MCF 10A (cell line): ENCODE measurements at regions of chr16 and their contacts with region 1.

Region 1: DNA sequence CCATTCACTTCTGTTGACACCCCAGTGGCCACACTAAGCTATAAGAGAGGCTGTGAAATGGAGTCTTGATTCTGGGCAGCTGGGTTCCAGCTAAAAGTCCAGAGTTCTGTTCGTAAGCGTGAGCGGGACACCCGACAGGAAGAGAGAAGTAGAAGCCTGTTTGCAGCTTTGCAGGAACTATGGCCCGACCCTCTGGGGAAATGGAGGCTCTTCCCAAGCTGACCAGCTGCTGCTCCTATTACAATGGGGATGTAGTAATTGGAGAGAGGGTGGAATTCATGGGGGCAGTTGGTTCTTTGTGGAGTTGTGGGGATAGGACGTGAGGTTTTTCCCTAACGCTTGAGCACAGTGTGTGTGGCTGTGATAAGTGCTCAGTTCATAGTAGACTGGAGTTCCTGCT is 28.4 kb downstream of the UBALD1 start:
- DNase-seq: no peak
- H3K4me3 Mint-ChIP-seq: no peak overlapping the region
- H3K27ac Mint-ChIP-seq: no peak overlapping the region
- H3K4me1 Mint-ChIP-seq: peaks cover 7% of the 10 kb centered on the region
- H3K27me3 Mint-ChIP-seq: no peaks in the 10 kb centered on the region
- CTCF ChIP-seq: no peak

Region 2: GRCh38 chr16:3202903-3203539 is 1383.3 kb before region 1 on chr16:
- CTCF ChIA-PET with region 1: no interaction called
- POLR2A ChIA-PET with region 1: no interaction called
- intact Hi-C with region 1: no loop called
- DNase-seq: no peak
- H3K4me3 Mint-ChIP-seq: no peak overlapping the region
- H3K27ac Mint-ChIP-seq: no peak overlapping the region
- H3K4me1 Mint-ChIP-seq: no peaks in the 10 kb centered on the region
- H3K27me3 Mint-ChIP-seq: peaks cover 20% of the 10 kb centered on the region
- CTCF ChIP-seq: no peak

Region 3: GRCh38 chr16:4544473-4544872 is 41.8 kb before region 1 on chr16:
- CTCF ChIA-PET with region 1: interaction called, 12 read pairs
- POLR2A ChIA-PET with region 1: no interaction called
- intact Hi-C with region 1: loop called (anchors 5 kb)
- DNase-seq: no peak
- H3K4me3 Mint-ChIP-seq: no peak overlapping the region
- H3K27ac Mint-ChIP-seq: no peak overlapping the region
- H3K4me1 Mint-ChIP-seq: no peaks in the 10 kb centered on the region
- H3K27me3 Mint-ChIP-seq: peaks cover 20% of the 10 kb centered on the region
- CTCF ChIP-seq: no peak

Region 4: DNA sequence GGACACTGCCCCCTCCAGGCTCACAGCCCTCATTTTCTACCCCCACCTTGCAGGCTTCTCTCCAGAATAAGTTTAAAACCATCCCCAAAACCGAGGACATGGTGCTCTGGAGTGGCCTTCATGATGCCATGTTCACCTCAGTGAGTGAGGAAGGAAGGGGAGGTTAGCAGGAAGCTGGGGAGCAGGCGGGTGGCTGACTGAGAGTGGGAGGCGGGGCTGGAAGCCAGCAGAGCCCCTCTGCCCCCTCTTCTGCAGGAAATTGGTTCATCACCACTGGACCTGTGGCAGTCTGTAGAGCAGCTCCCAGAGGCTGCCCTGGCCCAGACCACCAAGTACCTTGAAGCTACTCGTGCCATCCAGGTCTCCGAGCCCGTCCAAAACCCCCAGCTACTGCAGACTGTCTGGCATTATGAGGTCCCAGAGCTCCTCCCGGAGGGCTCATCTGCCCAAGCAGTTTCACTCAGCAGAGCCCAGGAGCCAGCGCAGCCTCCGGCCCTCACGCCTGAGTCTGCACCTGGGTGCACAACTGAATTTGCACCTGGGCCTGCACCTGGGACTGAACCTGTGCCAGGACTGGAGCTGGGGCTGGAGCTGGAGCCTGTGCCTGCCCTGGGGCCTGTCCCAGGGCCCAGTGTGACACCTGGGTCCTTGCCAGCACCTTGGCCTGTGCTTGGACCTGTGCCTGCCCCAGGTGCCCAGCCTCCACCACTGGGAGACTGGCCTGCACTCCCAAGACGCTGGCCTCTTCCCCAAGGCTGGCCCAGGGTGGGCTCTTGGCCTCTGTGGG is 11.2 kb before region 1 on chr16:
- CTCF ChIA-PET with region 1: interaction called, 10 read pairs
- POLR2A ChIA-PET with region 1: no interaction called
- intact Hi-C with region 1: no loop called
- DNase-seq: no peak
- H3K4me3 Mint-ChIP-seq: no peak overlapping the region
- H3K27ac Mint-ChIP-seq: no peak overlapping the region
- H3K4me1 Mint-ChIP-seq: peaks cover 5% of the 10 kb centered on the region
- H3K27me3 Mint-ChIP-seq: no peaks in the 10 kb centered on the region
- CTCF ChIP-seq: no peak

Region 5: DNA sequence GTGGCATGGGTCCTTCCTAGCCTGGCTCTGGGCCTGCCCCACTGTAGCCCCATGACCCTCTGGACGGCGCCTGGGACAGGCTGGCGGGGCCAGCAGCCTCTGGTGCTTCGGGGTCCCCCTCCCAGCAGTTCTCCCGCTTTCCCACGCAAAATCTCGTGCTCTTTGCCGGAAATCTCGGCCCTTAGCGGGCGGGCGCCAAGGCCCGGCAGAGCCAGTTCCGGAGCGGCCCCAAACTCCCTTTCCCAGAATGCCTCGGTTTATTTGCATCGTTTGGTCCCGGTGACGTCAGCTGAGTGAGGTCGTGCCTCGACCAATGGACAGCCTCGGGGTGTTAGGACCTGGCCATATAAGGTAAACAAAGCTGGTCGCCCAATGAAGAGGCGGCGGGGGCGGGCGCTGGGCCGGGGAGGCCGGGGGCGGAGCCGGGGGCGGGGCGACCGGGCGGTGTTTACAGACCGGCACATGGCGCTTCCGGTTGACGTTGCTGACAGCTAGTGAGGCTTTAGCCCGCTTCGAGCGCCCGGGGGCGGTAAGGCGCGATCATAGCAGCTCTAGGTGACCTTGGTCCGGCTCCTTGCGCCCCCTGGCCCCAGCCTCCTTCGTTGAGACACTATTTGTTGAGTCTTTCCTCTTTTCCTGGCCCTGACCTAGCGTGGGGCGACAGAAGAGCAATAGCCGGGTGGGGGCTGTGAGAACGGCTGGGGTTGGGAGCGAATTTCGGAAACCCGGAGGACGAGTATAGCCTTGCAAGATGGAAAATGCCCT is 29.9 kb after region 1 on chr16:
- CTCF ChIA-PET with region 1: interaction called, 14 read pairs
- POLR2A ChIA-PET with region 1: interaction called, 3 read pairs
- intact Hi-C with region 1: no loop called
- DNase-seq: peak; percentile 100
- H3K4me3 Mint-ChIP-seq: peak overlapping the region; percentile 85
- H3K27ac Mint-ChIP-seq: peak overlapping the region; percentile 98
- H3K4me1 Mint-ChIP-seq: peaks cover 18% of the 10 kb centered on the region
- H3K27me3 Mint-ChIP-seq: no peaks in the 10 kb centered on the region
- CTCF ChIP-seq: peak; percentile 33

Region 6: GRCh38 chr16:4814542-4815173 is 228.4 kb after region 1 on chr16:
- CTCF ChIA-PET with region 1: no interaction called
- POLR2A ChIA-PET with region 1: no interaction called
- intact Hi-C with region 1: no loop called
- DNase-seq: no peak
- H3K4me3 Mint-ChIP-seq: no peak overlapping the region
- H3K27ac Mint-ChIP-seq: no peak overlapping the region
- H3K4me1 Mint-ChIP-seq: no peaks in the 10 kb centered on the region
- H3K27me3 Mint-ChIP-seq: no peaks in the 10 kb centered on the region
- CTCF ChIP-seq: no peak